ENCODE measurements at regions of chr14 and their contacts with region 1.

Region 1: GRCh38 chr14:93970549-93970946 is 5.8 kb downstream of the ASB2 start:
- DNase-seq: peak; percentile 31 to 37
- ATAC-seq: peak; percentile 68 to 89
- H3K4me3 ChIP-seq: no peak overlapping the region
- H3K27ac ChIP-seq: no peak overlapping the region
- H3K4me1 ChIP-seq: peaks cover 8% of the 10 kb centered on the region; the same call in 2 of the 3 replicates
- CTCF ChIP-seq: peak; percentile 46
- EP300 ChIP-seq: no peak
- POLR2A ChIP-seq: no peak
- RAD21 ChIP-seq: peak; percentile 52 to 66

Region 2: GRCh38 chr14:93496856-93497741 is 473.4 kb before region 1 on chr14:
- CTCF ChIA-PET with region 1: no interaction called
- POLR2A ChIA-PET with region 1: no interaction called
- DNase-seq: no peak
- ATAC-seq: no peak
- H3K4me3 ChIP-seq: no peak overlapping the region
- H3K27ac ChIP-seq: no peak overlapping the region
- H3K4me1 ChIP-seq: no peaks in the 10 kb centered on the region
- CTCF ChIP-seq: no peak
- EP300 ChIP-seq: no peak
- POLR2A ChIP-seq: no peak
- RAD21 ChIP-seq: no peak

Region 3: DNA sequence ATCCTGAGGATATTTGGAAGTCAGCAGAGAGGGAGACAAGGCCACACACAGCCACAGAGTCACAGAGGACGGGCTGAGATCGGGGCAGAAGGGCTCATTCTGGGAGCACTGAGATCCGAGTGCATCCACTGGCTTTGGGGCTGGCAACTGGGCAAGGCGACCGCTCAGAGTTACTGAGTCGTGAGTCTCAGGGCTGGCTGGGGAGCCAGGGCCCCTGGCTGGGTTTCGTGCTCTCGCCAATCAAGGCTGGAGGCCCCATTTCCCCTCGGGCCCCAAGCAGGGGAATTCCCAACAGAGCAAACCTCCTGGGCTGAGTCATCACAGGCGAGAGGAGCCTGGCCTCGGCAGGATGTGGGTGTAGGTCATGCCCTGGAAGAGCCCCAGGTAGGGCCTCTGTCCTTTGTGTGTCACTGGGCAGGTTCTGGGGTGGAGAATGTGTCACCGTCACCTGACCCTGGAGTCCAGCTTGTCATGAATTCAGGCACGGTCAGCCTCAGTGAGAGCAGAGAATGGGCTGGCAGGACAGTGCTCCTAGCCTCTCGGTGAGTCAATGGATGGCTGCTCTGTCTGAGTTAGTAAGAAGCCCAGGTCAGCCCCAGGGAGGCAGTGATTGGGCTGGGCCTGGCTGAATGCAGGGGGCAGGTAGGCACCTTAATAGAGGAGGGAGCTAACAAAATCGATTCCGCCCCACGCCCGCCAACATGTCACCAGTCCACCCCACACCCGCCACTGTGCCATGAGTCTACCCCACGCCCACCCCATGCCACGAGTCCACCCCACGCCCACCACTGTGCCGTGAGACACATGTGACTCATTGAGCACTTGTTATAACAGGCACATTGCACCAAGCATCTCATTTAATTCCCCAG is 11.1 kb before region 1 on chr14:
- CTCF ChIA-PET with region 1: interaction called, 601 read pairs
- POLR2A ChIA-PET with region 1: no interaction called
- DNase-seq: peak; percentile 85 to 92
- ATAC-seq: peak; percentile 90 to 92
- H3K4me3 ChIP-seq: no peak overlapping the region
- H3K27ac ChIP-seq: peak overlapping the region; percentile 56 to 81; a peak in 5 of 6 replicates
- H3K4me1 ChIP-seq: peaks cover 22% of the 10 kb centered on the region
- CTCF ChIP-seq: no peak
- EP300 ChIP-seq: peak in 1 of 2 experiments; percentile 70; a peak in 2 of 5 replicates
- POLR2A ChIP-seq: no peak
- RAD21 ChIP-seq: 0 out of 5 replicates have a peak, but pooled peaks of 1 of the 2 experiments have one; percentile 5

Region 4: GRCh38 chr14:93984987-93985410 is 14.5 kb after region 1 on chr14:
- CTCF ChIA-PET with region 1: interaction called, 50 read pairs
- POLR2A ChIA-PET with region 1: no interaction called
- DNase-seq: peak; percentile 56 to 76
- ATAC-seq: peak; percentile 75 to 87; a peak in 5 of 6 replicates
- H3K4me3 ChIP-seq: no peak overlapping the region
- H3K27ac ChIP-seq: 0 out of 6 replicates have a peak overlapping the region, but pooled peaks of 1 of the 2 experiments have one; percentile 20
- H3K4me1 ChIP-seq: peaks cover 15% of the 10 kb centered on the region
- CTCF ChIP-seq: peak; percentile 24
- EP300 ChIP-seq: no peak
- POLR2A ChIP-seq: no peak
- RAD21 ChIP-seq: peak; percentile 21 to 34; a peak in 1 of 5 replicates

Region 5: GRCh38 chr14:94278731-94279130 is 308.2 kb after region 1 on chr14:
- CTCF ChIA-PET with region 1: no interaction called
- POLR2A ChIA-PET with region 1: no interaction called
- DNase-seq: no peak
- ATAC-seq: no peak
- H3K4me3 ChIP-seq: no peak overlapping the region
- H3K27ac ChIP-seq: no peak overlapping the region
- H3K4me1 ChIP-seq: no peaks in the 10 kb centered on the region
- CTCF ChIP-seq: no peak
- EP300 ChIP-seq: no peak
- POLR2A ChIP-seq: no peak
- RAD21 ChIP-seq: no peak

Region 6: GRCh38 chr14:94505641-94506040 is 535.1 kb after region 1 on chr14:
- CTCF ChIA-PET with region 1: no interaction called
- POLR2A ChIA-PET with region 1: no interaction called
- DNase-seq: no peak
- ATAC-seq: no peak
- H3K4me3 ChIP-seq: no peak overlapping the region
- H3K27ac ChIP-seq: no peak overlapping the region
- H3K4me1 ChIP-seq: no peaks in the 10 kb centered on the region
- CTCF ChIP-seq: no peak
- EP300 ChIP-seq: no peak
- POLR2A ChIP-seq: no peak
- RAD21 ChIP-seq: no peak